ENCODE measurements at regions of chr9 and their contacts with region 1.

Region 1: GRCh38 chr9:97598461-97599288 is 34.5 kb downstream of the TSTD2 start:
- DNase-seq: peak in 4 of 6 donors; percentile 66 to 79 (median 69)
- ATAC-seq: peak; percentile 85 to 95 (median 88)
- H3K4me3 ChIP-seq: no peak overlapping the region
- H3K27ac ChIP-seq: no peak overlapping the region
- H3K4me1 ChIP-seq: peaks cover 0 to 4% (median 0%) of the 10 kb centered on the region in 3 donors
- H3K27me3 ChIP-seq: no peaks in the 10 kb centered on the region
- CTCF ChIP-seq: peak; percentile 67 to 82 (median 79)

Region 2: GRCh38 chr9:97468658-97469448 is 129.8 kb before region 1 on chr9:
- intact Hi-C with region 1: loop called (anchors 5 to 10 kb)
- DNase-seq: peak; percentile 67 to 87 (median 68)
- ATAC-seq: peak; percentile 98 to 100 (median 100)
- H3K4me3 ChIP-seq: no peak overlapping the region
- H3K27ac ChIP-seq: no peak overlapping the region
- H3K4me1 ChIP-seq: peaks cover 0 to 4% (median 0%) of the 10 kb centered on the region in 3 donors
- H3K27me3 ChIP-seq: no peaks in the 10 kb centered on the region
- CTCF ChIP-seq: peak; percentile 55 to 77 (median 66)

Region 3: DNA sequence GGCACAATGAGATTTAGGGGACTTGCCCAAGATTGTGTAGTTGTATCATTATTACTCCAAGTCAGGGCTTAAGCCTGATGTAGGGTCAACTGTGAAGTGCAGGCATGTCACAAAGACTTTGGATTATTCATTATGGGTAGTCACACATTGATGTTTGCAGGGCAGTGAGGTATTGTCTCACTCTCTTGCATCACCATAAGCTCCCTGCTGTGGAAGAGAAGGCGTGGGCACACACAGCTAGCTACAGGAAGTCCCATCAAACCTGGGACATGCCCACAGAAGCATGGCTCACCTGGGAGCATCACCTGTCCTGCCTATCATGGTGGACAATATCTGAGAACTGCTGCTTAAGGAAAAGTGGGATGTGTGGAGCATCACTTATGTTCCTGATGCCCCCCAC is 55.1 kb before region 1 on chr9:
- intact Hi-C with region 1: loop called in 1 of 3 experiments (anchors 5 kb)
- DNase-seq: no peak
- ATAC-seq: no peak
- H3K4me3 ChIP-seq: no peak overlapping the region
- H3K27ac ChIP-seq: no peak overlapping the region
- H3K4me1 ChIP-seq: peaks cover 3 to 9% (median 4%) of the 10 kb centered on the region in 3 donors
- H3K27me3 ChIP-seq: no peaks in the 10 kb centered on the region
- CTCF ChIP-seq: no peak

Region 4: DNA sequence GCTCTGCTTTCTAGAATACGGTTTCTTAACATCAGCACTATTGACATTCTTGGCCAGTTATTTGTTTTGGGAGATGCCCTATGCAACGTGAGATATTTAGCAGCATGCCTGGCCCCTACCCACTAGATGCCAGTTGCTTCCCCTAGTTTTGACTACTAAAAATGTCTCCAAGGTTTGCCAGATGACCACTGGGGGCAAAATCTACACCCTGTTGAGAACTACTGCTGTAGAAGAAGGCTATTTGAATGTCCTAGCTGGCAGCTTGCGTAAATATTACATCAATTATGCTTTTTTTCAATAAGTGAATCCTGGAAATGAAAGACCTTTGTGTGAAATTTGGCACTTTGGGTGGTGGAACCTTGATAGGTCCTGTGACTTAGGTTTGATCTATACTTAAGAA is 40.0 kb after region 1 on chr9:
- intact Hi-C with region 1: no loop called
- DNase-seq: no peak
- ATAC-seq: peak in 2 of 4 donors; percentile 7 to 29
- H3K4me3 ChIP-seq: no peak overlapping the region
- H3K27ac ChIP-seq: no peak overlapping the region
- H3K4me1 ChIP-seq: peaks cover 25 to 38% (median 37%) of the 10 kb centered on the region in 3 donors
- H3K27me3 ChIP-seq: no peaks in the 10 kb centered on the region
- CTCF ChIP-seq: no peak

Region 5: DNA sequence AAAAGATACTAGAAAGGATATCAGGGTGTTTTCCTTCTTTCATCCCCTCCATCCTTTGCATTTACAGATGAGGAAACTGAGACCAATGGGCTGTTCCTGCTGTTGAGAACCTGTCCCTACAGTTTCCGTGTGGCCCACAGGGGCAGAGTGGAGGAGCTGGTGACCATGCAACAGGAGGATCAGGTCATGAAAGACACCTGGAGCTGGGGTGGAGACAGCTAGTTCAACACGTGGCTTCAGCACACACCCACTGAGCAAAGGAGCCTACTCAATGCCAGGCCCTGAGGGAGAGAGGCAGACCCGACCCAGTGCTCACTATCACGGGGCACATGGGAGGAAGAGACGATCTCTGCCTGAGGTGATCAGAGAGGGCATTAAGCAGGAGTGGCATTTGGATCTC is 129.6 kb after region 1 on chr9:
- intact Hi-C with region 1: no loop called
- DNase-seq: no peak
- ATAC-seq: no peak
- H3K4me3 ChIP-seq: no peak overlapping the region
- H3K27ac ChIP-seq: no peak overlapping the region
- H3K4me1 ChIP-seq: no peaks in the 10 kb centered on the region
- H3K27me3 ChIP-seq: no peaks in the 10 kb centered on the region
- CTCF ChIP-seq: no peak

Region 6: DNA sequence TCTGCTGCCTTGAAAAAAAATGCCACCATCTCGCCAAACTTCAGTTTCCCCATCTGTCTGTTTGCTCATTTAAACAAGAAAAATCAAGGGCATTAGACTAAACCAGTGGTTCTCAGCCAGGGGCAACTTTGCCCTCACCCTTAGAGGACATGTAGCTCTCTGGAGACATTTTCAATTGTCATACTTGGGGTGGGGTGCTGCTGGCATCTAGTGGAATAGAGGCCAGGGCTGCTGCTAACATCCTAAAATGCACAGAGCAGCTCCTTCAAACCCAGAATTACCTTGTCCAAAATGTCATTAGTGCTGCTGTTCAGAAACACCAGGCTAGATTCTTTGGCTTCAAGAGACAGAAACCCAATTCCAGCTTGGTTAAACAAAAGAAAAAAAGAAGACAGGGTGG is 183.2 kb after region 1 on chr9:
- intact Hi-C with region 1: no loop called
- DNase-seq: no peak
- ATAC-seq: no peak
- H3K4me3 ChIP-seq: no peak overlapping the region
- H3K27ac ChIP-seq: no peak overlapping the region
- H3K4me1 ChIP-seq: no peaks in the 10 kb centered on the region
- H3K27me3 ChIP-seq: no peaks in the 10 kb centered on the region
- CTCF ChIP-seq: no peak